ENCODE measurements at regions of chr15 and their contacts with region 1.

Region 1: DNA sequence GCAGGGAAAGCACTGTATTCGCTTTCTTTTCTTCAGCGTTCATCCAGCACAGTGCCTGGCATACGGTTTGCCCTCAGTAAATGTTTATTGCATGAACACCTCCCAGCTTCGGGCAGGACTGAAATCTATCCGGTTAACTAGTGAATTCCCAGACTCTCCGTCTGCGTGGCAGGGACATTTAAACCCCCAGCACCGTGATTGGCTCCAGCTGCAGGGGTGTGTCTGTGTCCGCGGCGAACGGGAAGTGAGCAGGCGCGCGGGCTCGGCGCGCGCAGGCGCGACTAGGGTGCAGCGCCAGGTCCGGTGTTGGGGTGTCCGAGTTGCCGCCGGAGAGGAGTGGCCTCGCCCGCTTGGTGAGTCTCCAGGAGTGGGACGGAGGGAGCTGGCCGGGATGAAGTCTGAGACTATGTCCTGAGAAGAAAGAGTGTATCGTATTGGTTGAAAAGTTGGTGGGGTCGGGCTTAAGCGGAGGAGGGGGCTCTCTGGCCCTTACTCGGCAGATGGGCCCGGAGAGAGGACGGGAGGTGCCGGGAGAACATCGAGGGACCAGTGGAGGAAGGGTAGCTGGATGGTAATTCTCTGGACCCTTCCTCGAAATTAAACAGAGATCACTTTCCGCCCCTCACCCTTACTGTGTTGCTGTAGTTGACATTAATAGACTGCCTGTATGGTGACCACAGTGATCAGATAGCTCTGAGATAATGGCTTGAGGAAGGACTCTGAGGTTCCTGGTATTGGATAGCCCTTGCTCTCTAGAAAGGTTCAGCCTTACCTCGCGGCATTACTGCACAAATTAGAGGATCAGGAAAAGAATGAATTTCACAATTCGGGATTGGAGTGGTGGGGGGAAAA is at the start of gene SNAP23:
- DNase-seq: peak; percentile 97
- ATAC-seq: peak; percentile 96
- total RNA-seq, gene SNAP23: 23.5 TPM

Region 2: GRCh38 chr15:42523331-42523730 is 27.7 kb after region 1 on chr15:
- intact Hi-C with region 1: no loop called
- DNase-seq: no peak
- ATAC-seq: no peak

Region 3: GRCh38 chr15:42575188-42576039 is 79.8 kb after region 1 on chr15 and contains the start of gene STARD9:
- intact Hi-C with region 1: loop called (anchors 5 kb)
- DNase-seq: peak; percentile 99
- ATAC-seq: peak; percentile 97
- total RNA-seq, gene STARD9: 7.2 TPM

Region 4: GRCh38 chr15:42808913-42809312 is 313.3 kb after region 1 on chr15:
- intact Hi-C with region 1: no loop called
- DNase-seq: no peak
- ATAC-seq: no peak